T-cell (primary cell): ENCODE measurements at regions of chr13 and their contacts with region 1.

Region 1: GRCh38 chr13:89514534-89515312 is 1832.8 kb upstream of the MIR17HG start:
- DNase-seq: no peak
- ATAC-seq: no peak
- H3K4me3 ChIP-seq: no peak overlapping the region
- H3K4me3 Mint-ChIP-seq: no peak overlapping the region
- H3K27ac ChIP-seq: no peak overlapping the region
- H3K27ac Mint-ChIP-seq: no peak overlapping the region
- H3K4me1 ChIP-seq: no peaks in the 10 kb centered on the region
- H3K4me1 Mint-ChIP-seq: no peaks in the 10 kb centered on the region
- H3K27me3 ChIP-seq: no peaks in the 10 kb centered on the region
- H3K27me3 Mint-ChIP-seq: no peaks in the 10 kb centered on the region

Region 2: GRCh38 chr13:89474432-89474831 is 40.3 kb before region 1 on chr13:
- CTCF ChIA-PET with region 1: no interaction called
- POLR2A ChIA-PET with region 1: no interaction called
- DNase-seq: no peak
- ATAC-seq: no peak
- H3K4me3 ChIP-seq: no peak overlapping the region
- H3K4me3 Mint-ChIP-seq: no peak overlapping the region
- H3K27ac ChIP-seq: no peak overlapping the region
- H3K27ac Mint-ChIP-seq: no peak overlapping the region
- H3K4me1 ChIP-seq: no peaks in the 10 kb centered on the region
- H3K4me1 Mint-ChIP-seq: no peaks in the 10 kb centered on the region
- H3K27me3 ChIP-seq: no peaks in the 10 kb centered on the region
- H3K27me3 Mint-ChIP-seq: no peaks in the 10 kb centered on the region

Region 3: GRCh38 chr13:89610331-89610730 is 95.6 kb after region 1 on chr13:
- CTCF ChIA-PET with region 1: no interaction called
- POLR2A ChIA-PET with region 1: no interaction called
- DNase-seq: no peak
- ATAC-seq: no peak
- H3K4me3 ChIP-seq: no peak overlapping the region
- H3K4me3 Mint-ChIP-seq: no peak overlapping the region
- H3K27ac ChIP-seq: no peak overlapping the region
- H3K27ac Mint-ChIP-seq: no peak overlapping the region
- H3K4me1 ChIP-seq: no peaks in the 10 kb centered on the region
- H3K4me1 Mint-ChIP-seq: no peaks in the 10 kb centered on the region
- H3K27me3 ChIP-seq: no peaks in the 10 kb centered on the region
- H3K27me3 Mint-ChIP-seq: no peaks in the 10 kb centered on the region

Region 4: GRCh38 chr13:89660752-89661151 is 146.0 kb after region 1 on chr13:
- CTCF ChIA-PET with region 1: no interaction called
- POLR2A ChIA-PET with region 1: interaction called in 1 of 2 experiments, 10 read pairs
- DNase-seq: no peak
- ATAC-seq: no peak
- H3K4me3 ChIP-seq: no peak overlapping the region
- H3K4me3 Mint-ChIP-seq: no peak overlapping the region
- H3K27ac ChIP-seq: no peak overlapping the region
- H3K27ac Mint-ChIP-seq: no peak overlapping the region
- H3K4me1 ChIP-seq: no peaks in the 10 kb centered on the region
- H3K4me1 Mint-ChIP-seq: no peaks in the 10 kb centered on the region
- H3K27me3 ChIP-seq: no peaks in the 10 kb centered on the region
- H3K27me3 Mint-ChIP-seq: no peaks in the 10 kb centered on the region